B cell (primary cell): ENCODE measurements at regions of chr5 and their contacts with region 1.

Region 1: GRCh38 chr5:66814146-66814991 is 218.2 kb downstream of the MAST4 start:
- DNase-seq: peak; percentile 46
- ATAC-seq: no peak
- H3K4me3 ChIP-seq: no peak overlapping the region
- H3K4me3 Mint-ChIP-seq: no peak overlapping the region
- H3K27ac ChIP-seq: no peak overlapping the region
- H3K27ac Mint-ChIP-seq: no peak overlapping the region
- H3K4me1 ChIP-seq: peaks cover 0 to 7% of the 10 kb centered on the region in 2 donors
- H3K4me1 Mint-ChIP-seq: peaks cover 23% of the 10 kb centered on the region
- H3K27me3 ChIP-seq: peaks cover 0 to 6% (median 0%) of the 10 kb centered on the region in 4 experiments
- H3K27me3 Mint-ChIP-seq: peaks cover 4% of the 10 kb centered on the region
- CTCF ChIP-seq: peak; percentile 80

Region 2: DNA sequence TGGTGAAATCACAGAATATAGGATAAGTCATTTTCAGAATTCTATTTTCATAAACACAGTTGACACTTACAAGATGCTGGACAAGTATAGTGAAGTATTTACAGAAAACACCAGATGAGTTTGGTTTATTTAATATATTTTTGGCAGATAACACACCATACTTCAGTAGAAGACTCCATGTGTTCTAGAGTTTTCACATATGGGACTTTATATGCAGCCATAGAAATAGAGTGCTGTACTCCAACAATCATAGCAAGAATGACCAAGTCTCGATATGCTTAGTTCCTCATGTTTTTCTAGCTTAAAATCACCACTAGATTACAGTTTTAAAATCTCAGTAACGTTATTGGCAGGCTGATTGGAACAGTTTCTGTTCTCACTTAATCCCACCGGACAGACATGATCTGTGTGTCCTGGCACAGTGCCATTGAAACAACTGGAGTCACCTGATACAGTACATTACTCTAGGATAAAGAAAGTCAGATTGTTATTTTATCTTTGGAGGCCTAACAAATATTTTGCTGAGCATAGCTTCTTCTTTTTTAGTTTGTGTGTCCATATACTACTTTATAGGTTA is 933.8 kb before region 1 on chr5:
- CTCF ChIA-PET with region 1: no interaction called
- POLR2A ChIA-PET with region 1: no interaction called
- intact Hi-C with region 1: no loop called
- DNase-seq: no peak
- ATAC-seq: no peak
- H3K4me3 ChIP-seq: no peak overlapping the region
- H3K4me3 Mint-ChIP-seq: no peak overlapping the region
- H3K27ac ChIP-seq: no peak overlapping the region
- H3K27ac Mint-ChIP-seq: no peak overlapping the region
- H3K4me1 ChIP-seq: no peaks in the 10 kb centered on the region
- H3K4me1 Mint-ChIP-seq: no peaks in the 10 kb centered on the region
- H3K27me3 ChIP-seq: no peaks in the 10 kb centered on the region
- H3K27me3 Mint-ChIP-seq: no peaks in the 10 kb centered on the region
- CTCF ChIP-seq: no peak

Region 3: GRCh38 chr5:66828548-66829357 is 14.4 kb after region 1 on chr5:
- CTCF ChIA-PET with region 1: interaction called, 28 read pairs
- POLR2A ChIA-PET with region 1: no interaction called
- intact Hi-C with region 1: no loop called
- DNase-seq: peak; percentile 53
- ATAC-seq: peak; percentile 95
- H3K4me3 ChIP-seq: peak overlapping the region; percentile 7 to 67 (median 34)
- H3K4me3 Mint-ChIP-seq: peak overlapping the region; percentile 84
- H3K27ac ChIP-seq: no peak overlapping the region
- H3K27ac Mint-ChIP-seq: no peak overlapping the region
- H3K4me1 ChIP-seq: peaks cover 13 to 20% of the 10 kb centered on the region in 2 donors
- H3K4me1 Mint-ChIP-seq: peaks cover 19% of the 10 kb centered on the region
- H3K27me3 ChIP-seq: peaks cover 0 to 10% (median 3%) of the 10 kb centered on the region in 4 experiments
- H3K27me3 Mint-ChIP-seq: peaks cover 28% of the 10 kb centered on the region
- CTCF ChIP-seq: no peak